Ovary (tissue), 10 donors: ENCODE measurements at regions of chr1 and their contacts with region 1.

Region 1: DNA sequence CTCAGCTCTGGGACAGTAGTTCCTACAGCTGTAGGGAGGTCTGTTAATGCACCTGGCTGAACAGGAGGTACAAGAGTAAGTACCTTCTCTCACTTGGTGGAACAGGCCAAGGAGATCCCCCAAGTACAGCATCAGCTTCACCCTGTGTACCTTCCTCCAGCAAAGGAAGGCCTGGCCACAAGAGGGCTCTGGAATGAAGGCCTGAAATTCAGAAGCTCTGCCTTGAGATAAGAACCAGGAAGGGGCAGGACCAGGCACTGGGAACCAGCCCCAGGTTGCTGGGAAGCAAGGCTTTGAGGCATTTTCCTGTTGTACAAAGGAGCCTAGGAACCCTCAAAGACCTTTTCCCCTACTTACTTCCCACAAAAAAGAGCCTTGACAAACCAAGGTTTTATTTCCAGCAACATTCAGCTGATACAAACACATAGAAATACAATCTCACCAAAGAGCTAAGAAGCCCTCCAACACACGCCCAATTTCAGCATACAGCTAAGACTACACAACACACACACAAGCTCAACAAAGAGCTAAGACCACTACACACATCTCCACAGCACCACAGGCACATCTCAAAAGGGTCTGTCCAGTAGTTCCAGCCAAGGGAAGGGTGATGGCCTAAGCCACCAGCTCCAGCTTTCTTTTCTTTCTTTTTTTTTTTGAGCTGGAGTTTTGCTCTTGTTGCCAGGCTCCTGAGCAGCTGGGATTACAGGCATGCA is 23.5 kb downstream of the F11R start:
- DNase-seq: peak; percentile 43 to 67 (median 63)
- H3K4me3 ChIP-seq: no peak overlapping the region
- H3K27ac ChIP-seq: peak overlapping the region in 1 of 2 donors; percentile 29
- H3K4me1 ChIP-seq: no peaks in the 10 kb centered on the region
- H3K27me3 ChIP-seq: no peaks in the 10 kb centered on the region
- CTCF ChIP-seq: peak in 2 of 3 donors; percentile 9 to 15
- EP300 ChIP-seq: no peak
- POLR2A ChIP-seq: no peak

Region 2: GRCh38 chr1:161032409-161032808 is 34.9 kb after region 1 on chr1:
- intact Hi-C with region 1: no loop called
- DNase-seq: no peak
- H3K4me3 ChIP-seq: no peak overlapping the region
- H3K27ac ChIP-seq: no peak overlapping the region
- H3K4me1 ChIP-seq: no peaks in the 10 kb centered on the region
- H3K27me3 ChIP-seq: no peaks in the 10 kb centered on the region
- CTCF ChIP-seq: no peak
- EP300 ChIP-seq: no peak
- POLR2A ChIP-seq: no peak

Region 3: DNA sequence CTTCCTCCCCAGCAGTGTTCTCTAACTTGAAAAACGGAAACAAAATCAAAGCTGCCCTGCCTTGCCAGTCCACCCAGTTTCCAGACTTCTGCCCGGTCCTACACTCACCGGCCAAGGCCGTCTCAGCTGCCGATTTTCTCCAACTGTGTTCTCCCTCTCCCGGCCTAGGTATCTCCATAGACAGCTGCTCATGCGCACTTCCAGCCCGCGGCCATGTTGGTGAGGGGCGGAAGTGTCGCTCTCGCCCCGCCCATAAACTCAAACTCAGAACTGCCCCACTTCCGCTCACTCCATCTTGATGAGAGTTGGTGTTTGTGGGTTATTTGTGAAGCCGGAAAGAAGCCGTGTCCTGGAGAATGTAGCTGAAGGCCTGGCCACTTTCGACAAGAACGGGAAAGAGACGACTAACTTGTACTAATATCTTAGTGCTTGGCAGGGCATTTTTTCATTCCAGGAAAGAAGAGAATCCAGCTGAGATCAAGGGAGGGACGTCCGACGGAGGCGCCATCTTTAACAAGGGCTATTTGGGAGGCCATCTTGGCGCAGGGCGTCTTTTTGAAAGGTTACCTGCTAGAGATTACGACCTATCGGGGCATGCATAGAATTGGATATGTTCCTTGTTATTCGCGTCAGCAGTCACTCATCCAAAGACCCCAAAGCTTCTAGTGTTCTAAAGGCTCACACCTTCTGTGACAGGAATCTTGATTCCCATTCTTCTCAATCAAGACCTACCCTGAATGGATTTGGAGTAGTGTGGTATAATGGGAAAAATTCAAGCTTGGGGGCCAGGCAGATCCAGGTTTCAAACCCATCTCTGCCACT is 48.5 kb after region 1 on chr1 and contains the start of gene USF1:
- intact Hi-C with region 1: loop called in 1 of 4 experiments (anchors 5 kb)
- DNase-seq: peak; percentile 92 to 96 (median 93)
- H3K4me3 ChIP-seq: peak within 1 kb of the TSS; percentile 89
- H3K27ac ChIP-seq: peak within 1 kb of the TSS; percentile 79 to 92
- H3K4me1 ChIP-seq: peaks cover 2% of the 10 kb centered on the region
- H3K27me3 ChIP-seq: no peaks in the 10 kb centered on the region
- CTCF ChIP-seq: no peak
- EP300 ChIP-seq: no peak
- POLR2A ChIP-seq: peak; percentile 74
- total RNA-seq, gene USF1: 28.1 to 49.6 (median 44.0) TPM

Region 4: GRCh38 chr1:161117759-161118581 is 120.5 kb after region 1 on chr1 and contains the starts of genes NIT1 and PFDN2:
- intact Hi-C with region 1: no loop called
- DNase-seq: peak; percentile 84 to 92 (median 88)
- H3K4me3 ChIP-seq: peak within 1 kb of the TSS; percentile 87
- H3K27ac ChIP-seq: peak within 1 kb of the TSS; percentile 77 to 82
- H3K4me1 ChIP-seq: peaks cover 23% of the 10 kb centered on the region
- H3K27me3 ChIP-seq: no peaks in the 10 kb centered on the region
- CTCF ChIP-seq: peak in 1 of 3 donors; percentile 17
- EP300 ChIP-seq: peak; percentile 17
- POLR2A ChIP-seq: peak; percentile 94
- total RNA-seq, gene NIT1: 25.4 to 37.1 (median 33.7) TPM
- total RNA-seq, gene PFDN2: 18.1 to 54.0 (median 46.9) TPM